ENCODE measurements at regions of chr5 and their contacts with region 1.

Region 1: DNA sequence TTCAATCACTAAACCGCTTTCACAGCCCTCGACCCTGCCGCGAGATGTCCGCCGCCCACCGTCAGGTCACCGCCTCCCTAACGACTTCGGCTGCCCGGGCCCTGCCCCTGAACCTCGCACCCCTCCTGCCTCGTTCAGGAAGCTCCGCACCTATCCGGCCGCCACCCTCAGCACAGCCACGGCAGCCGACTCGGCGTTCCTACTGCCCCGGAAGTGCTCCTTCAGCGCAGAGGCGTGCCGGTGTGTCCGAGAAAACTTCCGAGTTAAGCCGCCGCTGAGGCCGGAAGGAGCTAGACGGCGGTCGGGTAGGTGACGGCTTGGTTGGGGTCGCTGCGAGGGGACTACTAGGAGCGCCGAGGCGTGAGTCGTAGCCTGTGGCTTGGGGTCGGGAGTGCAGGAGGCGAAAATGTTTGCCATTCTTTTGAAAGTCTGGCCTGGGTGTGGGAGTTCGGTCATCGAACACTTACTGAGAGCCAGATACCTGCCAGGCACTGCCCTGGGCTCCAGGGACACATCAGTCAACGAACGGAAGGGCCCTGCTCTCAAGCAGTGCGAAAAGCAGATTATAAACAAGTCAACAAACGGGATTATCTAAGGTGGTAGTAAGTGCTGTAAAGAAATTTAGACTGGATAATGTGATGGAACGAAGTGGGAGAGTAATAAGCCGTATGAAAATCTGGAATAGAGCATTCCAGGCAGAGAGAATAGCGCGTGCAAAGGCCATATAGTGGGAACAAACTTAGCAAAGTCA is at the starts of genes FAM114A2 and MFAP3:
- DNase-seq: peak; percentile 86 to 94 (median 89)
- ATAC-seq: peak; percentile 100
- H3K4me3 ChIP-seq: peak within 1 kb of the TSS; percentile 87
- H3K27ac ChIP-seq: peak within 1 kb of the TSS; percentile 88
- H3K4me1 ChIP-seq: 0 out of 5 replicates have a peak, but pooled peaks cover 0 to 4% of the 10 kb centered on the region in 2 experiments
- H3K27me3 ChIP-seq: no peaks in the 10 kb centered on the region
- CTCF ChIP-seq: no peak
- EP300 ChIP-seq: peak; percentile 10; the same call in 1 of the 2 replicates
- POLR2A ChIP-seq: peak; percentile 95
- RAD21 ChIP-seq: no peak
- polyA plus RNA-seq, gene FAM114A2: 14.4 to 25.5 TPM
- polyA plus RNA-seq, gene MFAP3: 9.5 to 11.0 TPM

Region 2: DNA sequence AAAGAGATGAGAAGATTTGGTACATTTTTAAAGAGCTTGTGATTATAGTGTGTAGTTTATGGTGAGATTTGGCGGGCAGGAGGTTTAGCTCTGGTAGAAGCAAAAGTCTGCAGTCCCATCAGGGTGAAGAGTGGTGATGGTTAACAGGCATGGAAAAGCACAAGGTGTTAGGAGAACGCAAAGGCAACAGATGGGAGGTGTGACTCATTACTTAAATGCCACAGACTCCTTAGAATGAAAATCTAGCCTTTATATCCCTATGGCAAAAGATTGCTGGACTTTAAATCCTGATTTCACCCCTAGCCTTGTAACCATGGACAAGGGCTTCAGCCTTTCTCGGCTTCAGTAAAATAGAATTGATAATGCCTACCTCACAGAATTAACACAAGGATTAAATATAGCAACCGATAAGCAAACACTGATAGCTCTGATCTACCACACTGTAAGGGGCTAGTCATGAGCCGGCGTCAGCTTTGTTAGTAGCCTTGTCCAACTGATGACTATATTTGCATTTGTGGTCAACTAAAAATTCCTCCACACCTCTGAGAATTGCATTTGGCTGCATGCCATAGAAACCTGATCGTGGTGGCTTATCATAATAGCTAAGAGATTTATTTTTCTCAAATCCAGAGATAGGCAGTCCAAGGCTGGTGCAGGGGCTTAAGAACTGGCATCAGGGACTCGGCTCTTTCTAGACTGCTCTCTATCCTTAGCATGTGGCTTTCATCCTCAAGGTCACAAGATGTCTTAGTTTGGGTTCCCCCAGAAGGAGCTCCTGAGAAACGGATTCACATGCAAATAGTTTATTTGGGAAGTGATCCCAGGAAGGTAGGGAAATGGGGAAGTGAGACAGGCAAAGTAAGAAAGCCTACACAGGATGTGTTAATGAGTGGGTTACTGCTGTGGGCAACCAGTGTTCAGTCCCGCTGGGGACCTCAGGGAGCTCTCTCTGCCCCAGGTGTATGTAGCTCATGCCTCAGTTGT is 19.5 kb after region 1 on chr5:
- CTCF ChIA-PET with region 1: no interaction called
- POLR2A ChIA-PET with region 1: interaction called, 16 read pairs
- in situ Hi-C with region 1: no loop called
- intact Hi-C with region 1: no loop called
- DNase-seq: peak in 1 of 4 experiments; percentile 18
- ATAC-seq: no peak; the same call in 2 of the 3 replicates
- H3K4me3 ChIP-seq: no peak overlapping the region
- H3K27ac ChIP-seq: no peak overlapping the region
- H3K4me1 ChIP-seq: peaks cover 0 to 3% of the 10 kb centered on the region in 2 experiments; a peak in 1 of 5 replicates
- H3K27me3 ChIP-seq: no peaks in the 10 kb centered on the region
- CTCF ChIP-seq: no peak
- EP300 ChIP-seq: no peak
- POLR2A ChIP-seq: no peak
- RAD21 ChIP-seq: no peak

Measured in K562 (cell line).